ENCODE measurements at regions of chr19 and their contacts with region 1.

Region 1: DNA sequence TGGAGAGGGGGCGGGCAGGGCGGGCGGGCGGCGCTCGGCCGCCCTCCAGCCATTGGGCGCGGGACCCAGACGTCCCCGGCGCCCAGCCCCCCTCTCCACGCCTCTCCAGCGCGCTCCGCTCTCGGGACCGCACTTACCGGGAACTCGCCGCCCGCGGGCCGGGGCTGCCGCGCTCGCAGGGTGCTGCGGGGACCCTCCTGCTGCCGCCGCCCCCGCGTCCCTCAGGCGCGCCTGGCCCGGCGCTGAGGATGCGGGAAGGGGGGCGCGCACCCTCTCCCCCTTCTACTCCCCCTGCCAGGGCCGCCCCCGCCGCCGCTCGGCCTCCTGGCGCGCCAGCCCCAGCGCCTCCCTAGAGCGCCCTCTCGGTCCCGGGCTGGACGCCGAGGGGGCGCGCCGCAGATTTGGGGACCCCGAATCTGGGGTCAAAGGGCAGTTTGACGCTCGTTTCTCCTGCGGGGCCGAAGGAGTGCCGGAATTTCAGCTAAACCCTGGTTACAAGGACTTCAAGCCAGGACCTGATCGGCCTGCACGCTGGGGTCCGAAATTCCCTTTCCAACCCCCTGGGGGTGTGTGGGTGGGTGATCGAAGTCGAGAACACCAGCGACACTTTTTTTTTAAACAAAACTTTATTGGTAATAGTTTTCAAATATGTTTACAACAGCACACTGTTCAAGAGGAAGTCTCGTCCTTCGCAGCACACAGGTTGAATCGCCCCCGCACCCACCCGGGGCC is 696 bp upstream of the SAMD1 start:
- DNase-seq: peak in 8 of 10 donors; percentile 40 to 89 (median 82)
- ATAC-seq: peak; percentile 54 to 70
- H3K4me3 Mint-ChIP-seq: peak overlapping the region; percentile 91 to 100 (median 100)
- H3K27ac Mint-ChIP-seq: peak overlapping the region; percentile 89 to 100 (median 99)
- H3K4me1 Mint-ChIP-seq: peaks cover 17 to 30% (median 20%) of the 10 kb centered on the region in 4 donors
- H3K27me3 Mint-ChIP-seq: peaks cover 0 to 2% (median 0%) of the 10 kb centered on the region in 5 donors

Region 2: GRCh38 chr19:14048443-14049153 is 42.6 kb before region 1 on chr19:
- POLR2A ChIA-PET with region 1: no interaction called
- DNase-seq: peak; percentile 54 to 81 (median 70)
- ATAC-seq: peak; percentile 72 to 89
- H3K4me3 Mint-ChIP-seq: no peak overlapping the region
- H3K27ac Mint-ChIP-seq: peak overlapping the region in 8 of 10 donors; percentile 13 to 82 (median 72)
- H3K4me1 Mint-ChIP-seq: peaks cover 1 to 12% (median 7%) of the 10 kb centered on the region in 4 donors
- H3K27me3 Mint-ChIP-seq: no peaks in the 10 kb centered on the region

Region 3: GRCh38 chr19:14059093-14059480 is 32.2 kb before region 1 on chr19:
- POLR2A ChIA-PET with region 1: no interaction called
- DNase-seq: peak in 9 of 10 donors; percentile 21 to 60 (median 48)
- ATAC-seq: peak in 1 of 2 donors; percentile 52
- H3K4me3 Mint-ChIP-seq: peak overlapping the region in 9 of 10 donors; percentile 26 to 83 (median 55)
- H3K27ac Mint-ChIP-seq: peak overlapping the region in 1 of 10 donors; percentile 27
- H3K4me1 Mint-ChIP-seq: peaks cover 10 to 28% (median 18%) of the 10 kb centered on the region in 4 donors
- H3K27me3 Mint-ChIP-seq: peaks cover 18 to 43% (median 24%) of the 10 kb centered on the region in 5 donors

Region 4: GRCh38 chr19:14117668-14118164 is 26.5 kb after region 1 on chr19 and contains the start of gene PRKACA:
- POLR2A ChIA-PET with region 1: interaction called, 13 read pairs
- DNase-seq: peak; percentile 94 to 99 (median 98)
- ATAC-seq: peak; percentile 90 to 94
- H3K4me3 Mint-ChIP-seq: peak within 1 kb of the TSS; percentile 86 to 99 (median 96)
- H3K27ac Mint-ChIP-seq: peak within 1 kb of the TSS; percentile 89 to 99 (median 98)
- H3K4me1 Mint-ChIP-seq: peaks cover 25 to 50% (median 48%) of the 10 kb centered on the region in 4 donors
- H3K27me3 Mint-ChIP-seq: no peaks in the 10 kb centered on the region
- polyA plus RNA-seq, gene PRKACA: 1.1 to 1.8 (median 1.3) TPM

Region 5: DNA sequence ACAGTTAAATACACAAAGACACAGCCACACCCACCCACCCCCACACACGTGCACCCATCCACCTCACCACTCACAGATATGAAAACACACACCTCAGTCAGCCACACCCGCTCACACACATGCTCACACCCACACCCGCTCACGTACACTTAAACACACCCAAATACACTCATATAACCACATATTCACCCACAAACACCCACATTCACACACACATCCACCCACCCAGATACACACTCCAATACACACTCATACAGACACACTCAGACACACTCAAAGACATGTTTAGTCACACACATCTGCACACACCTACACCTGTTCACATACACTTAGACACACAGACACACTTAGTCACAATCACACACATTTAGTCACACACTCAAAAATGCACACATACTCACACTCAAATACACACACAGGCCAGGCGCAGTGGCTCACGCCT is 84.1 kb after region 1 on chr19:
- POLR2A ChIA-PET with region 1: no interaction called
- DNase-seq: no peak
- ATAC-seq: no peak
- H3K4me3 Mint-ChIP-seq: no peak overlapping the region
- H3K27ac Mint-ChIP-seq: peak overlapping the region in 9 of 10 donors; percentile 2 to 85 (median 23)
- H3K4me1 Mint-ChIP-seq: peaks cover 4 to 8% (median 6%) of the 10 kb centered on the region in 4 donors
- H3K27me3 Mint-ChIP-seq: no peaks in the 10 kb centered on the region

Region 6: GRCh38 chr19:14214580-14214979 is 123.3 kb after region 1 on chr19:
- POLR2A ChIA-PET with region 1: no interaction called
- DNase-seq: peak in 1 of 10 donors; percentile 4
- ATAC-seq: no peak
- H3K4me3 Mint-ChIP-seq: no peak overlapping the region
- H3K27ac Mint-ChIP-seq: no peak overlapping the region
- H3K4me1 Mint-ChIP-seq: peaks cover 10 to 16% (median 11%) of the 10 kb centered on the region in 4 donors
- H3K27me3 Mint-ChIP-seq: no peaks in the 10 kb centered on the region